Activated naive CD4-positive, alpha-beta T cell treated with anti-CD3 and anti-CD28 coated beads, Interleukin-2, amount 10 ng/mL, durations not matched to agents 7 days and 5 days (primary cell): ENCODE measurements at regions of chr11 and their contacts with region 1.

Region 1: DNA sequence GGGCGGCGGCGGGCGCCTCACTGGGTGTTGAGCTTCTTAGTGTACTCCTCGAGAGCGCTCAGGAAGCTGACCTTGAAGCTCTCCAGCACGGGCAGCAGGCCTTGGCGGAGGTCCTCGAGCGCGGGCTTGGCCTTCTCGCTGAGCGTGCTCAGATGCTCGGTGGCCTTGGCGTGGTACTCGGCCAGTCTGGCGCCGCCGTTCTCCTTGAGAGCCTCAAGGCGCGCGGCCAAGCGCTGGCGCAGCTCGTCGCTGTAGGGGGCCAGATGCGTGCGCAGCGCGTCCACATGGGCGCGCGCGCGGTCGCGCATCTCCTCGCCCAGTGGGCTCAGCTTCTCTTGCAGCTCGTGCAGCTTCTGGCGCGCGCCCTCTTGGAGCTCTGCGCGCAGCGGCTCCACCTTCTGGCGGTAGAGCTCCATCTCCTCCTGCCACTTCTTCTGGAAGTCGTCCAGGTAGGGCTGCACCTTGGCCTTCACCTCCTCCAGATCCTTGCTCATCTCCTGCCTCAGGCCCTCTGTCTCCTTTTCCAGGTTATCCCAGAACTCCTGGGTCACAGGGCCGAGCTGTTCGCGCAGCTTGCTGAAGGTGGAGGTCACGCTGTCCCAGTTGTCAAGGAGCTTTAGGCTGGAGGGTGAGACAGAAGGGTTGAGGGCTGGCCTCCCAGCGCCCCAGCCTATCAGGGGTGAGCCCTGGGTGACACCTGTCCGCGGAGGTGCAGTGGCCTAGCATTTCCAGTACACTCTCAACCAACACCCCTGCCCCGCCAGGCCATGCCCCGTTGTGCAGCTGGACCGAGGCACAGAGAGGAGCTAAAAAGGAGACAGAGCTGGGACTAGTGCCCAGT is 1.4 kb downstream of the APOA1 start:
- DNase-seq: peak; percentile 89
- H3K4me3 Mint-ChIP-seq: peak overlapping the region; percentile 67
- H3K27ac Mint-ChIP-seq: peak overlapping the region; percentile 74
- H3K4me1 Mint-ChIP-seq: peaks cover 20% of the 10 kb centered on the region
- H3K27me3 Mint-ChIP-seq: peaks cover 34% of the 10 kb centered on the region

Region 2: DNA sequence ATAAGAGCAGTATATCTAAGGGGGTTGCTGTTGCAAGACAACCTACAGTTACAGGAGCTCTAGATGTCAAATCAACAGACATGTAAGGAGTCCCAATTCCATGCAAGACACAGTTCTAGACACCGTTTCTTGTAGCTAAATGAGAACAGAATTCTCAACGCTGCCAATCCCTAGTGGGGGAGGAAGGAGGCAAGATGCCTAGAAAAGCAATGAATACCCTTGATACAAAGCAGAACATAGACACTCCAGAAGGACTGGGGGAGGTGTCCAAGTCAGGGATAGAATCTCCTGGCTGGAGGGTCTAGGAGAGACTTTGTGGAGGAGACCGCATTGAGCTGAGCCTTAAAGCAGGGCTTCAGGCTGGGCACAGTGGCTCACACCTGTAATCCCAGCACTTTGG is 343.4 kb before region 1 on chr11:
- CTCF ChIA-PET with region 1: no interaction called
- DNase-seq: no peak
- H3K4me3 Mint-ChIP-seq: no peak overlapping the region
- H3K27ac Mint-ChIP-seq: no peak overlapping the region
- H3K4me1 Mint-ChIP-seq: no peaks in the 10 kb centered on the region
- H3K27me3 Mint-ChIP-seq: peaks cover 13% of the 10 kb centered on the region

Region 3: GRCh38 chr11:116657842-116658825 is 177.9 kb before region 1 on chr11:
- CTCF ChIA-PET with region 1: no interaction called
- DNase-seq: no peak
- H3K4me3 Mint-ChIP-seq: no peak overlapping the region
- H3K27ac Mint-ChIP-seq: no peak overlapping the region
- H3K4me1 Mint-ChIP-seq: no peaks in the 10 kb centered on the region
- H3K27me3 Mint-ChIP-seq: peaks cover 14% of the 10 kb centered on the region

Region 4: DNA sequence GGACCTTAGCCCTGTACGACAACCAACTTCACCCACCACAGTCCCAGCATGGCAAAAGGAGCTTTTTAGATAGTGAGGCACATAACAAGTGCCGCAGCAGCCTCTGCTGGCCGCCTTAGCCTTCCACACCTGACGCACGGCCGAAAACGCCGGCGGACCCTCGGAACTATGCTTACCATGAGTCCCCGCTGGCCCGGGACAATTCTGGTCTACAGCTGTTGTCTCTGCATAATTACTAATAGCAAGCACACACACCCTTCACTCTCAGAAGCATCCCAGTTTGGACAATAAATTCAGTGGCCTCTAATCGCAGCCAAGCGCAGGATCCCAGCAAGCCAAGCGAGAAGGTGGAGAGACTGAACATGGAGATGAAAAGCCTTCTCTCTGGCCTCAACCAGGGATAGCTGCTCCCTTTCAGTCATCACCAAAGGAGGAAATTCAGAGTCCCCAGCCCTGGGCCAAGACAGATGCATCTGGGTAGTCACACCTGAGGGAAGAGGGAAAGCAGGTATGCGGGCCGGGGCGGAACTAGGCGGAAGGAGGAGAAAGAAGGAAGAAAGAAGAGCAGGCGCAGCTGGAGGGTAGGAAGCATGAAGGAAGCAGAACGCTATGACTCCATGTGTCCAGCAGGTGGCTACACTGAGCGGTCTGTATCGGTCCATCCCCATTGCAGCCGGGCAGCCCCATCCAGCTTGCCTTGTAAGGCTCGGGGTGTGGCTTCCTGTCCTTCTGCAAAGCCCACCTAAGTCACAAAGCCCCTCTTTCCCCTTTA is 103.6 kb before region 1 on chr11:
- CTCF ChIA-PET with region 1: interaction called, 21 read pairs
- DNase-seq: peak; percentile 72
- H3K4me3 Mint-ChIP-seq: no peak overlapping the region
- H3K27ac Mint-ChIP-seq: no peak overlapping the region
- H3K4me1 Mint-ChIP-seq: peaks cover 3% of the 10 kb centered on the region
- H3K27me3 Mint-ChIP-seq: peaks cover 11% of the 10 kb centered on the region

Region 5: GRCh38 chr11:116772443-116773202 is 63.4 kb before region 1 on chr11 and contains the start of gene BUD13:
- CTCF ChIA-PET with region 1: interaction called, 16 read pairs
- DNase-seq: peak; percentile 95
- H3K4me3 Mint-ChIP-seq: peak within 1 kb of the TSS; percentile 99
- H3K27ac Mint-ChIP-seq: peak within 1 kb of the TSS; percentile 96
- H3K4me1 Mint-ChIP-seq: peaks cover 59% of the 10 kb centered on the region
- H3K27me3 Mint-ChIP-seq: no peaks in the 10 kb centered on the region

Region 6: GRCh38 chr11:116792869-116793771 is 42.9 kb before region 1 on chr11:
- CTCF ChIA-PET with region 1: interaction called, 139 read pairs
- DNase-seq: no peak
- H3K4me3 Mint-ChIP-seq: no peak overlapping the region
- H3K27ac Mint-ChIP-seq: no peak overlapping the region
- H3K4me1 Mint-ChIP-seq: peaks cover 13% of the 10 kb centered on the region
- H3K27me3 Mint-ChIP-seq: peaks cover 51% of the 10 kb centered on the region

Region 7: DNA sequence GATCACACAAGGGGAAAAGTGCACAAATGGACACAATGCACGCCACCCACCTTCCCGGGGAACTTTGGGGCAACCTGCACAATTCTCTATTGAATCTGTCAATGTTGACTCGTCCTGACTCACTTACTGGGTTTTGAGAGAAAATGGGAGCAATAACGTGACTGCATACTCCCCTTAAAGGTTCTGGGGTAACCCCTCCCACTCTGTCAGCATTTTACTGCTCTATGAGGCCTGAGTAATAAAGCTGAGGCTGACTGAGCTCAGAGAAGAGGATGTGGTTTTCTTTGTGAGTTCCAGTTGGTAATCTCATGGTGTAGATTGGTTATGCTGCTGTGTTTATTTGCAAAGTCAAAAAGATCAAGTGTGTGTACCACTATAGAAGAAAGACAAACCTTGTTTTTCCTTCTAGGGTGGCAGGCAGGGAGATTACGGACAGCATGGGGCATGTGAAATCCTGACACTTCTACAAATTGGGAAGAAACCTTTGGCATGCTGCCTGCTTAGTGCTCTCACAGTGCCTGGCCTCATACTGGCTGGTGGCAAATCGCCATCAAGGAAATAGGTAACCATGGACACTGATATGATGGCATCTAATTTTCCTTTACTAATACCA is 17.6 kb after region 1 on chr11:
- CTCF ChIA-PET with region 1: interaction called, 57 read pairs
- DNase-seq: peak; percentile 73
- H3K4me3 Mint-ChIP-seq: peak overlapping the region; percentile 2
- H3K27ac Mint-ChIP-seq: peak overlapping the region; percentile 96
- H3K4me1 Mint-ChIP-seq: peaks cover 74% of the 10 kb centered on the region
- H3K27me3 Mint-ChIP-seq: no peaks in the 10 kb centered on the region